Activated naive CD8-positive, alpha-beta T cell treated with anti-CD3 and anti-CD28 coated beads, Interleukin-2, amount 10 ng/mL, durations not matched to agents 7 days and 5 days (primary cell): ENCODE measurements at regions of chr17 and their contacts with region 1.

Region 1: GRCh38 chr17:39980351-39981206 is at the start of gene PSMD3:
- DNase-seq: peak; percentile 94
- ATAC-seq: peak; percentile 94
- H3K4me3 Mint-ChIP-seq: peak within 1 kb of the TSS; percentile 97
- H3K27ac Mint-ChIP-seq: peak within 1 kb of the TSS; percentile 94
- H3K4me1 Mint-ChIP-seq: peaks cover 27% of the 10 kb centered on the region
- H3K27me3 Mint-ChIP-seq: peaks cover 22% of the 10 kb centered on the region
- total RNA-seq, gene PSMD3: 82.5 to 87.9 TPM

Region 2: DNA sequence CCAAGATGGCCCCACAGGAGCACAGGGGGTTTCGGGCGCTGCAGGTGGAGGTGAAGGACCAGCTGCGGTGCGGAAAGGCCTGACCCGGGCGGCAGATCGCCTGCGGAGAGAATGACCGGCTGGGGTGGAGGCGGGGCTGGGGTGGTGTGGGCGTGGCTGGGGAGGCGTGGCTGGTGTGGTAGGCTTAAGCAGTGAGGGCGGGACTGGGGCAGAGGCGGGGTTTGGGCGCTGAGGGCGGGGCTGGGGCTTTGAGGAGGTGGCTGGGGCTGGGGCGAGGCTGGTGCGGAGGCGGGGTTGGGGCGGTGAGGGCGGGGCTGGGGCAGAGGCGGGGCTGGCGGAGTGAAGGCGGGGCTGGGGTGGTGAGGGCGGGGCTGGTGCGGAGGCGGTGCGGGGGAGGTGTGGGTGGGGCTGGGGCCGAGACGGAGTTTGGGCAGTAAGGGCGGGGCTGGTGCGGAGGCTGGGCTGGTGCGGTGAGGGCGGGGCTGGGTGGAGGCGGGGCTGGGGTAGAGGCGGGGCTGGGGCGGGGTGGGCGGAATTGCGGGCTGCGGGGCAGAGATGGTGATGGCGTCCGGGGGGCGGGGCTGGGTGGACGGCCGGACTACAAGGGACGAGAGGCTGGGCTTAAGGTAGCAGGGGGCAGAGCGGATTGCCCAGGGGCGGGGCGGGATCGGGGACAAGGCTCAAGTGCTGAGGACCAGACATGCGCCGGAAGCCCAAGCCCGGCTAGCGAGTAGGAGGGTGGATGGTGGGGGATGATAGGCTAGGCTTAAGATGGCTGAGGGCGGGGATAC is 27.7 kb before region 1 on chr17:
- POLR2A ChIA-PET with region 1: interaction called, 23 read pairs
- DNase-seq: peak; percentile 97
- ATAC-seq: peak; percentile 90
- H3K4me3 Mint-ChIP-seq: peak overlapping the region; percentile 87
- H3K27ac Mint-ChIP-seq: peak overlapping the region; percentile 86
- H3K4me1 Mint-ChIP-seq: peaks cover 12% of the 10 kb centered on the region
- H3K27me3 Mint-ChIP-seq: no peaks in the 10 kb centered on the region

Region 3: GRCh38 chr17:39963829-39964228 is 16.8 kb before region 1 on chr17:
- POLR2A ChIA-PET with region 1: interaction called, 23 read pairs
- DNase-seq: no peak
- ATAC-seq: peak; percentile 44
- H3K4me3 Mint-ChIP-seq: peak overlapping the region; percentile 6
- H3K27ac Mint-ChIP-seq: peak overlapping the region; percentile 59
- H3K4me1 Mint-ChIP-seq: peaks cover 16% of the 10 kb centered on the region
- H3K27me3 Mint-ChIP-seq: peaks cover 7% of the 10 kb centered on the region